ENCODE measurements at regions of chr1 and their contacts with region 1.

Region 1: DNA sequence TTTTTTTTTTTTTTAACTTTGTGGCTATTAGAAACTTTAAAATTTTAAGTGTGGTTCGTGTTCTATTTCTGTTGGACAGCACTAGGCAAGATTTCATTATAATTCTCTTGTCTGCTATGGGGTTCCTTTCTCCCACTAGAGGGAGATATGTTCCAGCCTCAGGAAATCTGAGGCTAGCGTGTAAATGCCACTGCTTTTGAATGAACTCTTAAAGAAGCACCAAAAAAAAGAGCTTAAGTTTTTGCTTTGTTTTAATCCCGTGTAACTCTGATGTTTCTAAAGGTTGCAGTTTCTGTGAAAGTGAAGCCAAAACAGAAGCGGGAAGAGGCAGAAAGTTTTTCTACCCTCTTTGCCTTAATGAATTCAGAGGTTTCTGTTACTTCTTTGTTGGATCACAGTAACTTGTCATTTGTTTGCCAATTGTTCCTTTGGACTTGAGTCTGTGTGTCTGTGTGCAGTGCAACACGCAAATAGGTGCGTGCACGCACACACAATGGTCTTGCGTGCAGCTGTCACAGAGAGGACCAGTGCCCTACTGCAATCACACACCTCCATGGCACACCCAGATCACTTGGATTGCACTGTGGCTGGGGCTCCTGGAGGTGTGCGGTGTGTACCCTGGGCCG is 32.3 kb downstream of the HHAT start:
- DNase-seq: peak; percentile 44
- H3K4me3 ChIP-seq: no peak overlapping the region
- H3K27ac ChIP-seq: no peak overlapping the region
- H3K27me3 ChIP-seq: peaks cover 3% of the 10 kb centered on the region
- CTCF ChIP-seq: peak; percentile 89

Region 2: GRCh38 chr1:210143465-210144062 is 217.4 kb before region 1 on chr1:
- CTCF ChIA-PET with region 1: interaction called, 58 read pairs
- POLR2A ChIA-PET with region 1: no interaction called
- DNase-seq: peak; percentile 51
- H3K4me3 ChIP-seq: no peak overlapping the region
- H3K27ac ChIP-seq: no peak overlapping the region
- H3K27me3 ChIP-seq: no peaks in the 10 kb centered on the region
- CTCF ChIP-seq: peak; percentile 66

Region 3: DNA sequence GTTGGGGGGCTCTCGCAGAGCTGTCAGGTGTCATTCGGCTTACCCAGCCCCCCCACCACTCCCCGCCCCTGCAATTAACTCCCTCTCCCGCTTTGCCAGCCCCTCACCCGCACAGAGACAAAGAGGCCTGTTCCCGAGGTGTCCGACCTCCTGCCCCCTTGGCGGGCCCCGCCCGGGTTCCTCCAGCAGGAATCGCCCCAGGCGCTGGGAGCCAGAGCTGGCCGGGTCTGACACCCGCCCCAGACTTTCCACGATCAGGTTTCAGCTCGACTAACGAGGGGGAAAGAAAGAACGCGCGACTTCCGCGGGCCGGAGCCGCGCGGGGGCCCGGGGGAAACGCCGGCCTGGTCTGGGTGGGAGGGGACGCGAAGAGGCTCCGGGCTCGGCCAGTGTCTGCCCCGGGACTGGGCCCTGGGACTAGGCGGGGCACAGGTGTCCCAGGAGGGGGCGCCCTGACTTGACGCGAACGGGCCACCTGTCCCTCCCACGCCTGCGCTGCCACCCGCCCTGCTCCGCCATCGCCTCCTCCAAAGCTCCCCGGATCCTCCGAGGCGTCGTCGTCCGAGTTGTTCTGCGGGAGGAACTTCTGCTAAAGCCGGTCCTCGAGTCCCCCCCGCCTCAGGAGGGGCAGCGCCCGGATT is 68.6 kb before region 1 on chr1:
- CTCF ChIA-PET with region 1: interaction called, 12 read pairs
- POLR2A ChIA-PET with region 1: no interaction called
- DNase-seq: no peak
- H3K4me3 ChIP-seq: peak overlapping the region; percentile 52
- H3K27ac ChIP-seq: peak overlapping the region; percentile 31
- H3K27me3 ChIP-seq: peaks cover 40% of the 10 kb centered on the region
- CTCF ChIP-seq: no peak

Region 4: GRCh38 chr1:210373885-210374599 is 13.1 kb after region 1 on chr1:
- CTCF ChIA-PET with region 1: interaction called, 176 read pairs
- POLR2A ChIA-PET with region 1: interaction called, 3 read pairs
- DNase-seq: peak; percentile 83
- H3K4me3 ChIP-seq: no peak overlapping the region
- H3K27ac ChIP-seq: peak overlapping the region; percentile 59
- H3K27me3 ChIP-seq: no peaks in the 10 kb centered on the region
- CTCF ChIP-seq: peak; percentile 96

Region 5: GRCh38 chr1:210394281-210394821 is 33.4 kb after region 1 on chr1:
- CTCF ChIA-PET with region 1: interaction called, 223 read pairs
- POLR2A ChIA-PET with region 1: no interaction called
- DNase-seq: no peak
- H3K4me3 ChIP-seq: no peak overlapping the region
- H3K27ac ChIP-seq: no peak overlapping the region
- H3K27me3 ChIP-seq: no peaks in the 10 kb centered on the region
- CTCF ChIP-seq: no peak

Region 6: DNA sequence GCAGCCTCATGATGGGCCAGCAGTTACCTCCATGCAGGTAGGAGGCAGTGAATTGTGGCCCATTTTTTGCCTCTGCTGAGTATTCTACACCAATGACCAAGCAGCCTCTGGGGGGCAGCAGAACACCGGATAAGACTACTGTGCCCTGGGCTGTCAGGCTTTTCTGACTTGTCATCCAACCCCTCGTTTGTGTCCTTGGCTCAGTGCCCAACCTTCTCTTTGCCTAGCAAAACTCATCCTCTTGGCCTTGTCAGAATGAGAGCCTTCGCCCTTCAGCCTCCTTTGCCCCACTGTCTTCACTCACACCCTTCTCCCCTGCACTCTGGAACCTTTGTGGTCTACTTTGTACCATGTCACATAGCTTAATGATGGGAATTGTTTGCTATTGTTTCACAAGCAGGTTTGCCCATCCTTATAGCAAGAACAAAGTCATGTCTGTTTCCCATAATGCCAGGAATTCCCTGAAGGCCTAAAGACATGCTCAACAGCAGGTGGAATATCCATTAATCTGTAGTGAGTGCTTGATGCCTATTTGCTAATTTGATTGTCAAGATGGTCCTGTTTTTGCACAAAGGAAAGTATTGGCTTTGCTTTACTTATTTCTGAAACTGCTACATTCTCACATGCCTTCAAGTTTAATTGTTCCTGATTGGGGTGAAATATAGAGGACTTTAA is 223.6 kb after region 1 on chr1:
- CTCF ChIA-PET with region 1: interaction called, 12 read pairs
- POLR2A ChIA-PET with region 1: no interaction called
- DNase-seq: peak; percentile 34
- H3K4me3 ChIP-seq: no peak overlapping the region
- H3K27ac ChIP-seq: no peak overlapping the region
- H3K27me3 ChIP-seq: no peaks in the 10 kb centered on the region
- CTCF ChIP-seq: peak; percentile 81